A549 (cell line): ENCODE measurements at regions of chr15 and their contacts with region 1.

Region 1: GRCh38 chr15:65824031-65824743 is 32.1 kb upstream of the DENND4A start:
- DNase-seq: peak; percentile 82 to 88
- ATAC-seq: peak; percentile 98 to 99
- H3K4me3 ChIP-seq: no peak overlapping the region
- H3K27ac ChIP-seq: peak overlapping the region in 1 of 2 experiments; percentile 11; a peak in 2 of 6 replicates
- H3K4me1 ChIP-seq: peaks cover 27% of the 10 kb centered on the region
- CTCF ChIP-seq: peak; percentile 70
- EP300 ChIP-seq: no peak
- POLR2A ChIP-seq: no peak
- RAD21 ChIP-seq: peak; percentile 68 to 72

Region 2: GRCh38 chr15:65792130-65792987 is 31.8 kb before region 1 on chr15 and contains the start of gene DENND4A:
- CTCF ChIA-PET with region 1: interaction called, 15 read pairs
- POLR2A ChIA-PET with region 1: interaction called, 9 read pairs
- DNase-seq: peak; percentile 91 to 99
- ATAC-seq: peak; percentile 86 to 92
- H3K4me3 ChIP-seq: peak within 1 kb of the TSS; percentile 72
- H3K27ac ChIP-seq: peak within 1 kb of the TSS; percentile 77 to 89
- H3K4me1 ChIP-seq: peaks cover 38% of the 10 kb centered on the region
- CTCF ChIP-seq: no peak
- EP300 ChIP-seq: no peak
- POLR2A ChIP-seq: peak; percentile 93
- RAD21 ChIP-seq: no peak
- polyA plus RNA-seq, gene DENND4A: 16.8 and 18.7 TPM in 2 replicates

Region 3: DNA sequence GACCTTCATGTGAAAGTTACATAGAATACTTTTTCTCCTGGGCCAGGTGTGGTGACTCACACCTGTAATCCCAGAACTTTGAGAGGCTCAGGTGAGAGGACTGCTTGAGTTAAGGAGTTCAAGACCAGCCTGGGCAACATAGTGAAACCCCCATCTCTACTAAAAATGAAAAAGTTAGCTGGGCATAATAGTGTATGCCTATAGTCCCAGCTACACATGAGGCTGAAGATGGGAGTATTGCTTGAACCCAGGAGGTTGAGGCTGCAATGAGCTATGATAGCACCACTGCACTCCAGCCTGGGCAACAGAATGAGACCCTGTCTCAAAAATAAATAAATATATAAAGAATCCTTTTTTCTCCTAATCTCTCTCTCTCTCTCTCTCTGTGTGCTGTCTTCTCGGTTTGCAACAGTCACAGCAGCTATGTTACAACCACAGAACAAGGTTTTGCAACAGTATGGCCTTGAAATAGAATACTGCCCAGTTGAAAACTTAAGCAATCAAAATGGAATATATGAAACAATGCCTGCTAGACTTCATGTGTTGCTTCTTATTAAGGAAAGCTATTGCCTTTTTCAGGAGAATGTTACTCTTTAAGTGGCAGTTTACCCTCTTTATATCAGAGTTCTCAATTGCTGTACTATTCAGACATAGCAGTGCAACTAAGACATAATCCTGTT is 19.8 kb before region 1 on chr15:
- CTCF ChIA-PET with region 1: interaction called, 14 read pairs
- POLR2A ChIA-PET with region 1: no interaction called
- DNase-seq: no peak
- ATAC-seq: no peak
- H3K4me3 ChIP-seq: no peak overlapping the region
- H3K27ac ChIP-seq: no peak overlapping the region
- H3K4me1 ChIP-seq: peaks cover 8% of the 10 kb centered on the region; the same call in 2 of the 3 replicates
- CTCF ChIP-seq: no peak
- EP300 ChIP-seq: no peak
- POLR2A ChIP-seq: no peak
- RAD21 ChIP-seq: no peak